Heart left ventricle (tissue), 16 donors: ENCODE measurements at regions of chr11 and their contacts with region 1.

Region 1: DNA sequence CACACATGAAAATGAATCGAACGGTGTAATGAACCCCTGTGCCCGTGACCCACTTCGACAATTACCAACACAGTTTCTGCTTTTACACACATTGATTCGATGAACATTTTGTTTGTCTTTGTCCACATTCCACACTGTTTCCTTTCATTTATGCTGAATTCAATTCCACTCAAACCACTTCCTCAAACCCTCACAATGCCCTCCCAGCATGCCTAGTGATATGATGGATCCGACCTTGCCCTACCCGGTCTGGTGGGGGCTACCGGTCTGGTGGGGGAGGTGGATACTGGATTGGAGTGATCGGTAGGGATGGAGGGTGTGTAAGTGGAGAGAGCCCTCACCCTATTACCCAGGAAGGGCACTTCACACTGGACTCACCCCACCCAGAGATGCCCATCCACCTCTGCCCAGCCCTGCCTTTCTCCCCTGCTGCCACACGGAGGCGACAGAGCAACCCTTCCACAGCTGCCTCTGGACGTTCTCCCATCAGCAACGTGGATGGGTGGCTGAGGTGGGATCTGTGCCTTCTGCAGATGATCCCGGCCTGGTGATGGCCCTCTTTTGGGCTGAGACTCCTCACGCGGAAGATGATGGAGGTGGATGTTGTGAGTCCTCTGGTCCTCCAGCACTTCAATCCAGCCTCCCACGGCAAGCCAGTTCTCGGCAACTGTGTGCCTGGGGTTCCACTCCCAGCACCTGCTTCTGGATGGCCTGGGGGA is 33.0 kb upstream of the P2RY2 start:
- DNase-seq: peak; percentile 59 to 88 (median 78)
- ATAC-seq: peak; percentile 16 to 63 (median 54)
- H3K4me3 ChIP-seq: peak overlapping the region in 1 of 12 donors; percentile 28
- H3K27ac ChIP-seq: peak overlapping the region in 4 of 12 donors; percentile 8 to 67 (median 30)
- H3K4me1 ChIP-seq: peaks cover 3 to 57% (median 24%) of the 10 kb centered on the region in 12 donors
- H3K27me3 ChIP-seq: no peaks in the 10 kb centered on the region
- CTCF ChIP-seq: peak; percentile 75 to 88 (median 84)
- POLR2A ChIP-seq: no peak

Region 2: DNA sequence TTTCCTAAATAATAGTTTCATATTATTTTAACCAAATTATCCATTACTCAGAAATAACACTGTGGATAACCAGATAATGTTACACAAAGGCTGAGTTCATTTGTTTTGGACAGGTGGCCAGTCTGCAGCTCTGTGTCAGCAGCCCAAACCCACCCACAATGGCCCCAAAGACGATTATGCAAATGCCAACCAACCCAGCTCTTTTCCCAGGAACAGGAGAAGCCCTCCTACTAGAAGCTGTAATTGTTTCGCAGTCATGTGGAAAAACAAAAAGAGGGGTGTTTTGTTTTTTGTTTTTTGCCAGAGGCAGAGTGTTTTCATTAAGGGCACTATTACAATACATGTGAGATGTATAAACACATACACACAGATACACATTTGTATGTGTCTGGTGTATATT is 145.1 kb before region 1 on chr11:
- intact Hi-C with region 1: no loop called
- DNase-seq: no peak
- ATAC-seq: no peak
- H3K4me3 ChIP-seq: no peak overlapping the region
- H3K27ac ChIP-seq: no peak overlapping the region
- H3K4me1 ChIP-seq: peaks cover 0 to 8% (median 0%) of the 10 kb centered on the region in 12 donors
- H3K27me3 ChIP-seq: no peaks in the 10 kb centered on the region
- CTCF ChIP-seq: no peak
- POLR2A ChIP-seq: no peak

Region 3: DNA sequence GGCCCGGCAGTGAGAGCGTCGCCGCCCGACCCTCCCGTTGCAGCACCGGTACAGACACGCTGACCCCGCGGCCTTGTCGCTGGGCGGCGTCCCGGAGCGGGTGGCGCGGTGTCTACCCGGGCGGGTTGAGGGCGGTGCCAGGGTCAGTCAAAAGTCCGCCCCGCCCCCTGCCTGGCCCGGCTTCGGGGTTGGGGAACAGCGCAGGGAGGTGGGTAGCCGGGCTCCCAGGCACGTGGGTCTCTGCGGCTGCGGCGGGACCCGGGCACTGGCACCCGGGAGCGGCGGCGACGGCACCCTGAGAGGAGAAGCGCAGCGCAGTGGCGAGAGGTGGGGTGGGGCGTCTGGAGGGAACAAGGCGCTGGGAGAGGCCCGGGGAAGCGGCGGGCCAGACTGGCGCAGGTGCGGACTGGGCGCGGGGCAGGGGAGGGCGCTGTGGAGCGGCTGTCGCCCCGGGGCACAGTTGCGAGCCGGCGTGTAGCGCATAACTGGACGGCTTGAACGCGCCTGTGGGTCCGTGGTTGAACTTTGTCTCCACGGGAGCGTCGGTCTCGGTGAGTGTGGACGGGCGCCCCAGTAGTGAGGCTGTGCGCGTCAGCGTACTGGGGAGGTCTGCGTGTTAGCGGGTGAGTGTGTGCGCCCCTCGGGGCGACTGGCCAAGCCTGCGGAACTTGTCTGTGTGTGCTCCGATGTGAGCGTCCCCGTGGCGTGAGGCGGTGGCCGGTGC is 33.2 kb after region 1 on chr11 and contains the start of gene P2RY2:
- intact Hi-C with region 1: loop called in 1 of 10 experiments (anchors 2 kb)
- DNase-seq: peak; percentile 85 to 93 (median 90)
- ATAC-seq: peak; percentile 72 to 90 (median 87)
- H3K4me3 ChIP-seq: peak within 1 kb of the TSS; percentile 47 to 70 (median 60)
- H3K27ac ChIP-seq: peak within 1 kb of the TSS; percentile 33 to 91 (median 84)
- H3K4me1 ChIP-seq: peaks cover 0 to 53% (median 26%) of the 10 kb centered on the region in 12 donors
- H3K27me3 ChIP-seq: no peaks in the 10 kb centered on the region
- CTCF ChIP-seq: peak; percentile 35 to 77 (median 58)
- POLR2A ChIP-seq: peak in 1 of 2 donors; percentile 51
- total RNA-seq, gene P2RY2: 10.2 to 28.3 (median 14.7) TPM

Region 4: DNA sequence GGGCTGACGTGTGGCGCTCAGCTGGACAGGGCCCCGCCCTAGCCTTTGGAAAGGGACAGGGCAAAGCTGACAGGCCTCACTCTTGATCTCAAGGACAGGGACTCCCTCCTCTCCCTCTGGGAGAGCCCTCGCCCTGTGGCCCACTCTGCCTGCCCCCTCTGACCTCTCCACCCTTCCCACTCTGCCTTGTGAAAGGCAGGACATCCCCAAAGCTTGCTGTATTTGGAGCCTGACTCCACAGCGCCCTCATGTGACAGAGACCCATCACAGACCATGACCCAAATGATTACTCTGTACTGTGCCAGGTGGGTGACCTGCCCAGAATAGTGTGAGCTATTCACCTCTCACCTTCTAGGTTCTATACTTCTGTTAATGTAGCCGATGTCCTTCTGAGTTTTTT is 51.7 kb after region 1 on chr11:
- intact Hi-C with region 1: loop called (anchors 1 to 5 kb)
- DNase-seq: peak; percentile 48 to 77 (median 74)
- ATAC-seq: peak in 3 of 4 donors; percentile 10 to 38 (median 21)
- H3K4me3 ChIP-seq: no peak overlapping the region
- H3K27ac ChIP-seq: peak overlapping the region in 11 of 12 donors; percentile 45 to 86 (median 77)
- H3K4me1 ChIP-seq: peaks cover 12 to 79% (median 54%) of the 10 kb centered on the region in 12 donors
- H3K27me3 ChIP-seq: no peaks in the 10 kb centered on the region
- CTCF ChIP-seq: peak; percentile 46 to 72 (median 61)
- POLR2A ChIP-seq: no peak

Region 5: DNA sequence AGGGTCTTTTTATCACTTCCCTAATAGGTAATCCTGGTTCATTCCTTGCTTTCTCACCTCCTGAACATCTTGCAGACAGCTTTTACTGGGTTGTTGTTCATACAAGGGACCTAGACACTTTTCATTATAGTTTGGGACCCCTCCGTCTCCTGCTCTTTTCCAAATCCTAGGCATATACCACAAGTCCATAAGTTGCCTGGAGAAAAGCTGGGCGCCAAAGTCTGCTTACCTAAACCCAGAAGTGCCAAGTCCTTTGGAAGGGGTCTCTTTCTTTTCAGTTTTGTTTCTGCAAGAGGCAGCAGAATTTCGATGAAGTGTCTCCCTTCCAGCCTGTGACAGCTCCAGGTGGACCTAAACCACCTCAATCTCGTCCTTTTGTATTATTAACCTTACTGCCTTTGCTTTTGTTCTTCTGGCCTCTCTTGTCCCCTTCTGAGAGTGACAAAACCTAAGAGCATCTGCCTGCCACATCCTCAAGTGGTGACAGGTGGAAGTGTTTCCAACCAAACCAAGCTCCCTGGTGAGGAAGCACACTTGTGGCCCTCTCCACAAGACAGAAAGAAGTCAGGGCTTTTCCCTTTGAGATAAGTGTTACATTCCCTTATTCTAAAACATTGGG is 67.6 kb after region 1 on chr11:
- intact Hi-C with region 1: no loop called
- DNase-seq: peak in 1 of 5 donors; percentile 2
- ATAC-seq: no peak
- H3K4me3 ChIP-seq: no peak overlapping the region
- H3K27ac ChIP-seq: no peak overlapping the region
- H3K4me1 ChIP-seq: peaks cover 0 to 9% (median 5%) of the 10 kb centered on the region in 12 donors
- H3K27me3 ChIP-seq: no peaks in the 10 kb centered on the region
- CTCF ChIP-seq: no peak
- POLR2A ChIP-seq: no peak

Region 6: GRCh38 chr11:73288873-73289707 is 104.0 kb after region 1 on chr11:
- intact Hi-C with region 1: loop called (anchors 1 to 5 kb)
- DNase-seq: peak; percentile 78 to 88 (median 83)
- ATAC-seq: peak; percentile 57 to 84 (median 80)
- H3K4me3 ChIP-seq: peak overlapping the region in 9 of 12 donors; percentile 14 to 54 (median 41)
- H3K27ac ChIP-seq: peak overlapping the region in 11 of 12 donors; percentile 19 to 95 (median 58)
- H3K4me1 ChIP-seq: peaks cover 0 to 67% (median 29%) of the 10 kb centered on the region in 12 donors
- H3K27me3 ChIP-seq: no peaks in the 10 kb centered on the region
- CTCF ChIP-seq: peak; percentile 88 to 96 (median 92)
- POLR2A ChIP-seq: no peak